Astrocyte of the cerebellum (primary cell): ENCODE measurements at regions of chrX and their contacts with region 1.

Region 1: DNA sequence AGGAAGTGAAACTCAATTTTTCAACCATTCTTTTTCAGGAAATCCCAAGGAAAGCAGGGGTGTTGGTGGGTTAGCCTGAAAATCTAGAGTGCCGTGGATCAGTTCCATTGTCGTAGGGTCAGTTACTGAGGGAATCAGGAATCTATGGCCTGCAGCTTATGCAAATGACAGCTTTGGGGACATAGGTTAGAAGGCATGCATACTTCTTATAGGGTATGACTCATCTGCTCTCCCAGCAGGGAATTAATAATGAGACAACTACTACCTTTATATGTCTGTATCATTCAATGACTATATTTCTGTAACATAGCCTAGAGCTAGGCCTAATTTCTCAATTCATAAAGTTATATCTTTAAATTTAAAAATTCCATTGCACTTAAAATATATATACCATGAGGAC is 36.6 kb downstream of the ZNF41 start:
- DNase-seq: no peak
- H3K4me3 ChIP-seq: no peak overlapping the region
- CTCF ChIP-seq: no peak

Region 2: DNA sequence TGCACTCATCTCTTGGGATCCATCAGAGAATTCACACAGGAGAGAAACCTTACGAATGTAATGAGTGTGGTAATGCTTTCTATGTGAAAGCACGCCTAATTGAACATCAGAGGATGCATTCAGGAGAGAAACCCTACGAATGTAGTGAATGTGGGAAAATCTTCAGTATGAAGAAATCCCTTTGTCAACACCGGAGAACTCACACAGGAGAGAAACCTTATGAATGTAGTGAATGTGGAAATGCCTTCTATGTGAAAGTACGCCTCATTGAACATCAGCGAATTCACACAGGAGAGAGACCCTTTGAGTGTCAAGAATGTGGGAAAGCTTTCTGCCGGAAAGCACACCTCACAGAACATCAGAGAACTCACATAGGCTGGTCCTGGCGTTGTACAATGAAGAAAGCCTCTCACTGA is 33.2 kb before region 1 on chrX:
- in situ Hi-C with region 1: loop called (anchors 5 kb)
- DNase-seq: no peak
- H3K4me3 ChIP-seq: no peak overlapping the region
- CTCF ChIP-seq: no peak